Right ventricle myocardium superior (tissue), 1 donor: ENCODE measurements at regions of chr9 and their contacts with region 1.

Region 1: GRCh38 chr9:72827950-72828731 is 124.7 kb downstream of the ALDH1A1 start:
- DNase-seq: no peak
- ATAC-seq: no peak

Region 2: DNA sequence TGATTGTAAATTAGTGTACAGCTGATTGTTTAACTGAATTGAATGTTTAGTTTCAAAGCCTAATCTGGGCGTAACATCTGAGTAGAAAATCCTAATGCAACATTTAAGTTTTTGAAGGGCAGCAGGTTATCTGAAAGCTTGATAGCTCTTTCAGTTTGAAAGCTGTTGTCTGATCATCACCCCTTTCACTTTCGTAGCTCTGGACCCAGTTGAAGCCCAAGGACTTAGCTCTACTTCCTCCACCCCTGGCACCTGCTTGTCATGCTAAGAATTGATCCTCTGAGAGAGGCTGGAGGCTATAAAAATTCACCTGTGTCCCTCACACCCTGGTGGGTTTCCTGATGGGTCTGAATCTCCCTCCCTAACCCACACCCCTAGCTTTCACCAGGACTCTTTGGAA is 549.2 kb before region 1 on chr9:
- intact Hi-C with region 1: loop called (anchors 5 kb)
- DNase-seq: no peak
- ATAC-seq: no peak